Heart right ventricle (tissue), 16 donors: ENCODE measurements at regions of chr17 and their contacts with region 1.

Region 1: DNA sequence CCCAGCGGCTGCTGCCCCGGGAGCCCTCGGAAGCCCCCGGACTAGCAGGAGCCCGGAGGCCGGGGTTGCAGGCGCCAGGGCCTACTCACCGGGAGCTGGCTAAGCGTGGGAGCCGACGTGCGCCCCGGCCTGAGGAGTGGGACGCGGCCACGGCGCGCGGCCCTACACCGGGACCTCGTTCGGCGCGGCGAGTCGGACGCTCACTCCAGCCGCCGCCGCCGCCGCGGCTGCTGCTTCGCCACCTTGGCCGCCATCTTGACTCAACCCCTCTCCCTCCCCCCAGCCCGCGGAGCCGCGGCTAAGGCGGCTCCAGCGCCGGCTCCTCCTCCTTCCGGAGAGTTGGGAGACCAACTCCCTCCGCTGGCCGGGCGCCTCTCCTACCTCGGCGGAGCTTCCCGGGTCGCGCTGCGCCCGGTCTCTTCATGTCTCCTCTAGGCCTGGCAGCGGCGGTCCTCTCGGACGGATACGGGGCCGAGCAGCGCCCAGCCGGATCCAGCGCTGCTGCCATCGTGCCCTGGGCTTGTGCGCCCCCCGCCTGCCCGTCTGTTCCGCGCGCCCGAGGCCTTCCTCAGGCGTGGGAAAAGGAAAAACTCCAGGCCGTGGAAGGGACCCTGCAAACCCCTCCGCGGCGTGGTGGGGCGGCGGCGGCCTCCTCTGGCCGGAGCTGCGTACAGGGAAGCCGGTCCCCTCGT is at the start of gene NCOR1:
- DNase-seq: peak; percentile 94
- ATAC-seq: peak; percentile 95 to 98 (median 97)
- H3K4me3 ChIP-seq: peak within 1 kb of the TSS; percentile 63 to 100 (median 92)
- H3K27ac ChIP-seq: peak within 1 kb of the TSS; percentile 85 to 100 (median 98)
- H3K4me1 ChIP-seq: peaks cover 3 to 65% (median 50%) of the 10 kb centered on the region in 9 donors
- H3K27me3 ChIP-seq: no peaks in the 10 kb centered on the region
- CTCF ChIP-seq: peak in 7 of 9 donors; percentile 19 to 66 (median 43)
- total RNA-seq, gene NCOR1: 61.4 to 81.6 (median 74.8) TPM

Region 2: DNA sequence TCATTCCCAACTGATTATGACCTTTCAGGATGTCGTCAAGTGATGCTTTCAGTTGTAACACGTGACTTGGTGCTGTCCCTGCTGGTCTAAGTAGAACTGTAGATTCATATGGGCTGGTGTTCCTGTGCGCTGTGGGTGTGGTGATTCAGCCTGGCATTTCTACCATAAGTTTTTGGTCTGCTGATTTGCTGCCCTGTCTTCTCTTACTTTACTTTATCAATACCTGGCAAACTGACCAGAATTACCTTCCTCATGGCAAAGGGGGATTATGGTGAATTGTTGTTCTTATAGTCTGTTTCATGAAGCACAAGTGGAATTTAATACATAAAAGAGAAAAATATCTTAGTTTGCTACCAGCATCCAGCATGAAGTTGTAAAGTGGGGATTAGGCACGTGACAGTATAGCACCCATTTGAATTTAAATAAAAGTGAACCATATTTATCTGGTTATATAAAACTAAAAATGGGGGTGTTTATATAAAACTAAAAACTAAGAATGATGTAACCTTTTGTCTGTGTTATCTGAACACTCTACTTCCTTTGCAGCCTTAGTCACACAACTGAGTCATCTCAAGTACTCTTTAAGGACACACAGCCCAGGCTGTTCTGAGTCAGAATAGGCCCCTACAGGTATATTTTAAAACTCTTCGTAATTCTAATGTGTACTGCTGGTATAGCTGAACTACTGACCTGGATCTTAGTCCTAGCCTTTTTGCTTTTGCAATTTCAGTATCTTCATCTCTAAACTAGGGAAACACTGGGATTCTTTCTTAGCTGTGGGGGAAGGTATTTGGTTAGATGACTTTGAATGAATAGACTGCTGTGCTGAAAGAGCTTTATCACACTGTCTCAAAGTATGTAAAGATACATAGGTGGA is 187.5 kb before region 1 on chr17:
- intact Hi-C with region 1: no loop called
- DNase-seq: no peak
- ATAC-seq: peak in 7 of 8 donors; percentile 56 to 96 (median 82)
- H3K4me3 ChIP-seq: no peak overlapping the region
- H3K27ac ChIP-seq: peak overlapping the region in 7 of 10 donors; percentile 13 to 61 (median 41)
- H3K4me1 ChIP-seq: peaks cover 0 to 23% (median 11%) of the 10 kb centered on the region in 9 donors
- H3K27me3 ChIP-seq: no peaks in the 10 kb centered on the region
- CTCF ChIP-seq: no peak

Region 3: DNA sequence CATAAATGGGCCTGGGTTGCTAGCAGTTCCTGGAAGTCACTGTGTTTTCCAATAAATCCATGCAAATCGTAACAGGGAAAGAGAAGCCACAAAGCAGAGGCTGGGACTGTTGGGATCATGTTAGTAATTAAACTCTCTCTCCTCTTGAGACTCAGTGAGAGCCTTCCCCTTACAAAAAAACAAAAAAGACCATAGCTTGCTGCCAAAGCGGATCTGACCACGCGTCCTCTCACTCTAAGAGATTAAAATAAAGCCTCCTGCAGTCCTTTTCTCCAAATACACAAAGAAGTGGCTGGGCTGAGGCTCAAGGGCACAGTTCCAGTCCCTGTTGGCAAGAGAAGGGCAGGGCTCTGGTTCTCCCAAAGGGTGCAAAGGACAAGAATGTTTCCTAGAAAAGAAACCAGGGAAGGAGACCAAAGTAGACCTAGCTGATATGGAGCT is 40.1 kb after region 1 on chr17:
- intact Hi-C with region 1: no loop called
- DNase-seq: peak; percentile 48 to 59
- ATAC-seq: peak; percentile 75 to 91 (median 85)
- H3K4me3 ChIP-seq: peak overlapping the region in 6 of 10 donors; percentile 15 to 30 (median 24)
- H3K27ac ChIP-seq: peak overlapping the region in 9 of 10 donors; percentile 35 to 80 (median 68)
- H3K4me1 ChIP-seq: peaks cover 6 to 29% (median 19%) of the 10 kb centered on the region in 9 donors
- H3K27me3 ChIP-seq: no peaks in the 10 kb centered on the region
- CTCF ChIP-seq: no peak

Region 4: GRCh38 chr17:16269658-16270057 is 54.2 kb after region 1 on chr17:
- intact Hi-C with region 1: loop called in 1 of 10 experiments (anchors 10 kb)
- DNase-seq: no peak
- ATAC-seq: no peak
- H3K4me3 ChIP-seq: no peak overlapping the region
- H3K27ac ChIP-seq: no peak overlapping the region
- H3K4me1 ChIP-seq: peaks cover 0 to 35% (median 0%) of the 10 kb centered on the region in 9 donors
- H3K27me3 ChIP-seq: no peaks in the 10 kb centered on the region
- CTCF ChIP-seq: no peak